ENCODE measurements at regions of chr6 and their contacts with region 1.

Region 1: DNA sequence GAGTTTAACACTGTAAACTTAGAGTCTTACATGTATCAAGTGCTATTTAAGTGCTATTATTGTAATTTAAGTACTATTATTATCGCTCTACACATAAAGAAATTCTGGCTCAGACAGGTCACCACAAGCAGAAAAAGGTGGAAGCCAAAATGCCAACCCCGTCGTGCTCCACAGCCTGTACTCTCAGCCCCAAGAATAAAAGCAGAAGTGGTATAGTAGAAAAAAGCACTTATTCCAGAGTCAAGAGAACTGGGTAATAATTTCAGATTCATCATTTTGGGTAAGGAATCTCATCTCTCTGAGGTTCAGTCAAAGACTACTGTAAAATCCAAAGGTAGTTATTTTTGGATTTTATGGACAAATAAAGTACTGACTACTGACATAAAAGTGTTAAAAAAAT is 943 bp downstream of the ZUP1 start:
- DNase-seq: peak; percentile 61
- H3K4me3 ChIP-seq: peak overlapping the region; percentile 79
- H3K27ac ChIP-seq: peak overlapping the region; percentile 45
- H3K4me1 ChIP-seq: peaks cover 26% of the 10 kb centered on the region
- CTCF ChIP-seq: no peak

Region 2: GRCh38 chr6:116596815-116597214 is 70.8 kb before region 1 on chr6:
- CTCF ChIA-PET with region 1: no interaction called
- POLR2A ChIA-PET with region 1: no interaction called
- intact Hi-C with region 1: no loop called
- DNase-seq: no peak
- H3K4me3 ChIP-seq: no peak overlapping the region
- H3K27ac ChIP-seq: no peak overlapping the region
- H3K4me1 ChIP-seq: no peaks in the 10 kb centered on the region
- CTCF ChIP-seq: no peak

Region 3: DNA sequence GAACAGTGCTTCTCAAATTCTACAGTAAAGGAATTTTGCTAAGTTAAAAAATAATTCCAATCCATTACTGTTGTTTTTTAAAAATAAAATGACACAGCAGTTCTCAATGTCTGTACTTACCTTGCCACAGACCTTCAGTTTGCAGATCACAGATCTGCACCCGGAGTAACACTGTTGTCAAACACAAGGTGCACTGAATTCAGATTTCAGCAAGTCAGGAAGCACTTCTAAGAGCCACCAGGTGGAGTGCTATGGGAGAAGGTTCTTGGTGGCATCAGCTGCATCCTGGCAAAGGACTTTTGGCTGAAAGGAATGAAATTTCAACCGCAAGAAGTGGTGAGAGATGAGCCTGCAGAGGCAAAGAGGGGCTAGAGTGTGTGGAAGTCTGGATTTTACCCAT is 33.9 kb before region 1 on chr6:
- CTCF ChIA-PET with region 1: no interaction called
- POLR2A ChIA-PET with region 1: no interaction called
- intact Hi-C with region 1: no loop called
- DNase-seq: peak; percentile 36
- H3K4me3 ChIP-seq: no peak overlapping the region
- H3K27ac ChIP-seq: no peak overlapping the region
- H3K4me1 ChIP-seq: peaks cover 19% of the 10 kb centered on the region
- CTCF ChIP-seq: peak; percentile 68

Region 4: DNA sequence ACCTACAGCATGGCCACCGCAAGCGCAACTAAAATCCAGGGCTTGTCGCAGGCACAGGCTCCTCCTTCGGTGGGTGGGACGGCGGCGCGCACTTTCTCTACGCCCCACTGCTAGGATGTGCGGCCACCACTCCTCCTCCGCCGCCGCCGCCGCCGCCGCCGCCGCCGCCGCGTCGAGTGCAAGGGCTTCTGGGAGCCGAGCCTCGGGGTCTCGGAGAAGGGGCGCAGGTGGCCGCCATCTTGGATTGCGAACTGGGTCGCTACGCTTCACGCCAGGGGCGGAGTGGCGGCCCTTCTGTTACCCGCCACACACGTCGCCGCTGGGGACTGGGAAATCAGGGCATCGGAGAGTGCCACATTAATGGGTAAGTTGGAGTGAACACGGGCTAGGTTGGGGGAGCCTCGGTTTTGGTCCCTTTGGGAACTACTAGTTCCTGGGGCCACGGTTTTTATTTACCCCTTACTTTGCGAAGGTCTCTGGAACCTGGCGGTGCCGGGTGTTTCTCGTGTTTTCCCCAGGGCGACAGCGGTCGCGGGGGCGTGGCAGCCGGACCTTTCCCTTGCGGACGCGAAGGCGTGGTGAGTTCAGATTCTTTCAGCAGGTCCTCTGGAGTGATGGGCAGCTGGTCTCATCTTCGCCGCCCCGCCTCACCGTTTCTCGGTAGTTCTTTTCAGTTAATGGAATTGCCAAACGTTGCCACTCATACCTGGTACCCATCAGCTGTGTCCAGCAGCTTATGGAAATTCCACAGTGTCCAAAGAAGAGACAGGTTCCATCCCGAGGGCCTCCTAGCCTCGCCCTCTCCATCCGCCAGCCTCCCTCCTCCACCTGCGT is 13.6 kb after region 1 on chr6 and contains the start of gene KPNA5:
- CTCF ChIA-PET with region 1: interaction called, 3 read pairs
- POLR2A ChIA-PET with region 1: interaction called, 15 read pairs
- intact Hi-C with region 1: no loop called
- DNase-seq: peak; percentile 92
- H3K4me3 ChIP-seq: peak within 1 kb of the TSS; percentile 82
- H3K27ac ChIP-seq: peak within 1 kb of the TSS; percentile 66
- H3K4me1 ChIP-seq: peaks cover 19% of the 10 kb centered on the region
- CTCF ChIP-seq: no peak
- total RNA-seq, gene KPNA5: 10.3 and 12.4 TPM in 2 replicates

Region 5: GRCh38 chr6:116969211-116969863 is 301.7 kb after region 1 on chr6:
- CTCF ChIA-PET with region 1: no interaction called
- POLR2A ChIA-PET with region 1: no interaction called
- intact Hi-C with region 1: no loop called
- DNase-seq: peak; percentile 57
- H3K4me3 ChIP-seq: no peak overlapping the region
- H3K27ac ChIP-seq: no peak overlapping the region
- H3K4me1 ChIP-seq: no peaks in the 10 kb centered on the region
- CTCF ChIP-seq: peak; percentile 87

Measured in OCI-LY7 (cell line).